ENCODE measurements at regions of chr3 and their contacts with region 1.

Region 1: DNA sequence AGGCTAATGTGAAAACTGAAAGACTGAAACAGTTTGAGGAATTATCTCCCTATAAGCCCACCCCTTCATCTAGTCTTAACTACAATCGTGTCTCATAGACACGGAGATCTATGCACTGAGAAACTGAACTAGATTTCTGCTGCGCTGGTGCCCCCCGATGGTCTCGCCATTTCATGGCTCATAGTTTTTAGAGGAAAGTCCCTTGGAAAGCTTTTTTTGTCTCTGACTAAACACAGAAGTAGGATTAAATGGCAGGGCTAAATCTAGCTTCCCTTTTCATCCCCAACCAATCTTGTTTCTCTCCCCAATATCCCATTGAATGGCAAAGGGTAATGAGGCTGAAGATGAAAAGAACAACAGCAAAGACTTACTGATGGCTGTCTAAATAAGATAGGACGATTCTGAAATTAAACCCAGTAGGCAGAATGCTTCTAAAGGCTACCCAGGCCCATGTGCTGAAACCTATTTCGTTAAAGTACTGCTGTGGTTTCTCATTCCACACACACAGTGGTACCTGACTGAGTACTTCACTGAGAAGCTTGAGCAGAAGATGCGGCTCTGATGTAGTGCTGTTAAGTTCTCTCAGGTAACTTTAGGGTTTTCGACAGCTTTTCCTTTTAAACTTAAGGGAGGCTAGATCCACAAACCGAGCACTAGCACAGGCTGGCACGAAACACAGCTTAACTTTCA is 142.7 kb downstream of the GADL1 start:
- DNase-seq: peak in 4 of 5 donors; percentile 18 to 57 (median 32)
- ATAC-seq: peak in 3 of 4 donors; percentile 39 to 57 (median 53)
- H3K4me3 ChIP-seq: no peak overlapping the region
- H3K27ac ChIP-seq: no peak overlapping the region
- H3K4me1 ChIP-seq: peaks cover 0 to 26% (median 0%) of the 10 kb centered on the region in 12 donors
- H3K27me3 ChIP-seq: no peaks in the 10 kb centered on the region
- CTCF ChIP-seq: peak in 11 of 12 donors; percentile 24 to 63 (median 45)
- POLR2A ChIP-seq: no peak

Region 2: DNA sequence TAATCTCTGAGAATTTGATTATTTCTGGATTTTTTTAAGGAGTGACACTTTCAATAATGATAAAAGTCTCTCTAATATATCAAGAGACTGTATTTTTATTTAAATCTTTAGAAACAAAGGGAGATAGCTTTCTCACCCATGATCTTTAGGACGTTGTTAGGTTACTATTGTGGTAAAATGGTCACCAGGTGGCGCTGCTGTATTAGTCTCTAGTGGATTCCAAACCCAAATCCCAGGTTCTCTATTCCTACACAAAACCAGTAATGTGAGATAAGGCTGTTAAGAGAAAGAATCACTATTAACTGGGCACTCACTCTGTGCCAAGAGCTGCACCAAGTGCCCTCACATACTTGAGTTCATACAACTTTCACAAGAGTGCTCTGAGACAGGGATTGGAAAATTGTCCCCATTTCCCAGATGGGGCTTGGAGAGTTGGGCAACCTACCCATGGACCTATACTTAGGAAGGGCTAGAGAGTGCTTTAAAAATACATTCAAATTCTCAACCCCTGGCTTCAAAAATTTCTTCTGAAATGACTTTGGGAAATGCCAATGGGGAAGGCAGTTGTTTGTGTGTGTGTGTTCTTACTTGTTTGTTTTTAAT is 738.7 kb before region 1 on chr3:
- intact Hi-C with region 1: loop called in 1 of 10 experiments (anchors 10 kb)
- DNase-seq: peak; percentile 48 to 75 (median 58)
- ATAC-seq: peak in 2 of 4 donors; percentile 61 to 73
- H3K4me3 ChIP-seq: no peak overlapping the region
- H3K27ac ChIP-seq: no peak overlapping the region
- H3K4me1 ChIP-seq: no peaks in the 10 kb centered on the region
- H3K27me3 ChIP-seq: no peaks in the 10 kb centered on the region
- CTCF ChIP-seq: peak; percentile 41 to 79 (median 67)
- POLR2A ChIP-seq: no peak

Region 3: DNA sequence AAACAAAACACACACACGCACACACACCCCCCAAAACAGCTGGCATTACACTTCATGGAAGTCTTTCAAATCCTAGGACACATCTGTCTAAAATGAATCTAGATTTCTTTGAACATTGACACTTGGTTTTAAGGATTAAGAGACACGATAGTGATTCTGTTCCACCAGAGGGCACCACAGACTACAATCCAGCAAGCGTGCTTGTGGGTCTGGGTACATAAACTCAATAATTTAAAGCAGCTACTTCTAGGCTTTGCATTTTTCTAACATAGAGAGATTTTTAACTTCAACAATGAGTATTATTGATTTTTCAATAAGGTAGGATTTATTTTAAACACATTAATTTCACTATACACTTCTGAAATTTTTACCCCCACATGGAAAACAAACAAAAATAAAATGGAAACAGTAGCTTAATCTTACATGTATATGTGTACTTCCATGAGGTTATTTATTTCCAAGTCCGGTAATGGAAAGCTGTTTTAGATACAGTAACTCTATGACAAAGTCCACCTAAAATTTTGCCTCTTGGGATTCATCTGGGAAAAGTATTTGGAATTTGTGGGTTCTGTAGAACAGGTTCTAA is 709.4 kb before region 1 on chr3:
- intact Hi-C with region 1: loop called (anchors 2 to 10 kb)
- DNase-seq: peak in 4 of 5 donors; percentile 35 to 55 (median 50)
- ATAC-seq: peak in 3 of 4 donors; percentile 46 to 78 (median 66)
- H3K4me3 ChIP-seq: no peak overlapping the region
- H3K27ac ChIP-seq: no peak overlapping the region
- H3K4me1 ChIP-seq: peaks cover 0 to 21% (median 1%) of the 10 kb centered on the region in 12 donors
- H3K27me3 ChIP-seq: no peaks in the 10 kb centered on the region
- CTCF ChIP-seq: peak; percentile 67 to 85 (median 78)
- POLR2A ChIP-seq: no peak

Region 4: DNA sequence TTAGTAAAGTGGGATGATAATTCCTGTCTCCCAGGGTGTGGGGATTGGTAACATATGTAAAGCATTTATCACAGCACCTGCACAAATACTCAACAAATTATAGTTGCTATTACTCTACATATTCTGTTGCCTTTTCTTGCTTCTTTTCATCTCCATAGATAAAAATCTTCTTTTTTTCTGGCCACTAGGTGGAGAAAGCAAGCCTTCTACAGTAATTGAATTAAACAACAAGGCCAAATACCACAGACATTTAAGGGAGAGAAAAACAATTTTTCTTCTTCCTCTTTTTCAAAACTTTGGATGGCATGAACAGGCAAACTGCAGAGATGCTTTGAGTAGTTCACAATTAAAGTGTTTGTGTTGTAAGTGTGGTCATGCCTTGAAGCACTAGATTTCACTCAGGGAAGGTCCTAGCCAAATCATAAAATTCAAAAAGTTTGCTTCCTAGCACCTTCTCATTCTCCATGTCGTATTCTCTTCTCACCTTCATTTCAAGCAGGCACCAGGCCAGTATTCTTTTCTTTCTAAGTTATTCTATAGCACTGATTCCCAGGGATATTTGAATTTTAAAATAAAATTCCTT is 638.8 kb before region 1 on chr3:
- intact Hi-C with region 1: loop called in 5 of 10 experiments (anchors 5 to 10 kb)
- DNase-seq: no peak
- ATAC-seq: peak in 2 of 4 donors; percentile 30 to 57
- H3K4me3 ChIP-seq: no peak overlapping the region
- H3K27ac ChIP-seq: no peak overlapping the region
- H3K4me1 ChIP-seq: peaks cover 0 to 17% (median 6%) of the 10 kb centered on the region in 12 donors
- H3K27me3 ChIP-seq: no peaks in the 10 kb centered on the region
- CTCF ChIP-seq: peak; percentile 56 to 81 (median 70)
- POLR2A ChIP-seq: no peak